Mammary epithelial cell (primary cell): ENCODE measurements at regions of chr14 and their contacts with region 1.

Region 1: DNA sequence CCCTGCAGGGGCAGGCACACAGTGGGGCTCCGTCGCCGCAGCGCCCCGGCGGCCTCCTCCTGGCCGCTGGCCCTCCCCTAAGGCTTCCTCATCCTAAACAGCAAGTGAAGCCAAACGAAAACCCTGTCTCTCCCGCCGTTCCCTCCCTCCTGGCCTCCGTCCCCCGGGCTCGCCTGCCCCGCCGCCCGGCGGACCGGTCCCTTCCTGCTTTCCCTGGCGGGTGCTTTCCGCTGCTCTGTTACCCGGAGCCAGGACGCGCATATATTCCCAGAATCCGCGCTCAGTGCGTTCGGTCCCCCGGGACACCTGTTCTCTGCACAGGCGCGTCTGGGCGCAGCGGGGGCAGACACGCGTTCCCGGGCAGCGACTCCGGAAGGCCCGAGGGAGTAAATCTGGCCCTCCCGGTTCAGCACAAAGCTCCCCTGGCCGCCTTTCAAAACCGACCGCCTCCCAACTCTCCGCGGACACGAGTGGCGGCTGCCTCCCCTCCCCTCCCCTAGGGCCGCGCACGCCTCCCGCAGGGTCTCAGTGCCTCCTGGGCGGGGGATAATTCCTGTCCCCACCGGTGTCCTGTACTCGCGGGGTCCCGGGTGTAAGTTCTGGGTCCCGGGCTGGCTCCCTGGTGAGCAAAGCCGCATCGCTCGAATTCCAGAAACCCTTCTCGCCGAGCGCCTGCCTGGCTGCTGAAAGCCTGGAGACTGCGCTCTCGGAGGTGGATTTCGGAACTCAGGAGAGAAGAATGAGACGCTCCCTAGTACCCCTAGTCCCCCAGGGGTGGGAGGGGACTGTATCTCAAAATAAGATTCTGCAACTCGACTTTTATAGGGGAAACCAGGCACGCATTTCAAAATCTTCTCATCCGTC is 21.4 kb upstream of the CEP170B start:
- DNase-seq: no peak
- H3K4me3 ChIP-seq: no peak overlapping the region
- H3K27ac ChIP-seq: no peak overlapping the region
- H3K4me1 ChIP-seq: peaks cover 5% of the 10 kb centered on the region
- H3K27me3 ChIP-seq: peaks cover 11% of the 10 kb centered on the region
- CTCF ChIP-seq: no peak

Region 2: GRCh38 chr14:104393898-104394381 is 449.7 kb before region 1 on chr14:
- CTCF ChIA-PET with region 1: no interaction called
- dilution Hi-C with region 1: no loop called
- in situ Hi-C with region 1: no loop called
- intact Hi-C with region 1: no loop called
- DNase-seq: no peak
- H3K4me3 ChIP-seq: no peak overlapping the region
- H3K27ac ChIP-seq: no peak overlapping the region
- H3K4me1 ChIP-seq: no peaks in the 10 kb centered on the region
- H3K27me3 ChIP-seq: no peaks in the 10 kb centered on the region
- CTCF ChIP-seq: no peak

Region 3: DNA sequence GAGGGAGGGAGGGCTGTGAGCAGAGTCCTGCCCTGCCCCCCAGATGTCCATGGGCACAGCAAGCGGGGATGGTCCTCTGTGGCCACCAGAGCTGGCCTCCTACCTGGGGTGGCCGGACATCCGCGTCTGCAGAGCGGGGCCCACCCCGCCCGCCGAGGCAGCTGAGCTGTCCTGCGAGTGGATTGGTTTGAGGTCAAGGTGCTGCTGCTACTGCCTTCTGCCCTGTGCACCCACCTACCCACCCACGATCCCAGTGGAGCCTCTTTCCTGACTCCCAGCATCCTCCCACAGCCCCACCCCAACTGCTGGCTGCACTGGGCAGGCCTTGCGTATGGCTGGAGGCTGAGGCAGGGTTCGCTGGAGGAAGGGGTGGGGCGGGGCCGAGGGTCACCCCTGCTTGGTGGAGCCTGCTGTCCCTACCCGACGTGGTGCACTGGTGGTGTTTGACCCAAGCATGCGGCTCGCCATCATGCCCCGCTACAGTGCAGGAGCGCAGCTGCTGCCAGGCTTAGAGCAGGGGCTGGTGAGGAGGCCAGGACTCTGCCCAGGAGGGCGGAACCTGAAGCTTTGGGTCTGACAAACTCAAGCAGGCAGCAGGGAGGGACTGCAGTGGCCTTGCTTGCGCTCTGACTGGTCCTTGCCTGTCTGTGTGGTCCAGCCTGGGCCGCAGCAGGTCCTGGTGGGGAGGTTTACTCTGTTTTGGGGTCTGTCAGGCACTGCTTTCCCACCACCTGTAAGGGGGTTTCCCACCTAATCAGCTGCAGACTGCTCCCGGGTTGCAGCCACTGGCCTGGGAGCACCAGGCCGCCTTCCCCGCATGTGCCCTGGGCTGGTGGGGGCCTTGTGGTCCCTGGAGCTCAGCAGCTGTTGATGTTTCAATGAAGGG is 45.1 kb after region 1 on chr14:
- CTCF ChIA-PET with region 1: no interaction called
- dilution Hi-C with region 1: loop called (anchors 5 kb)
- in situ Hi-C with region 1: no loop called
- intact Hi-C with region 1: no loop called
- DNase-seq: no peak
- H3K4me3 ChIP-seq: no peak overlapping the region
- H3K27ac ChIP-seq: no peak overlapping the region
- H3K4me1 ChIP-seq: no peaks in the 10 kb centered on the region
- H3K27me3 ChIP-seq: no peaks in the 10 kb centered on the region
- CTCF ChIP-seq: no peak